Transverse colon (tissue), 4 donors: ENCODE measurements at regions of chr17 and their contacts with region 1.

Region 1: DNA sequence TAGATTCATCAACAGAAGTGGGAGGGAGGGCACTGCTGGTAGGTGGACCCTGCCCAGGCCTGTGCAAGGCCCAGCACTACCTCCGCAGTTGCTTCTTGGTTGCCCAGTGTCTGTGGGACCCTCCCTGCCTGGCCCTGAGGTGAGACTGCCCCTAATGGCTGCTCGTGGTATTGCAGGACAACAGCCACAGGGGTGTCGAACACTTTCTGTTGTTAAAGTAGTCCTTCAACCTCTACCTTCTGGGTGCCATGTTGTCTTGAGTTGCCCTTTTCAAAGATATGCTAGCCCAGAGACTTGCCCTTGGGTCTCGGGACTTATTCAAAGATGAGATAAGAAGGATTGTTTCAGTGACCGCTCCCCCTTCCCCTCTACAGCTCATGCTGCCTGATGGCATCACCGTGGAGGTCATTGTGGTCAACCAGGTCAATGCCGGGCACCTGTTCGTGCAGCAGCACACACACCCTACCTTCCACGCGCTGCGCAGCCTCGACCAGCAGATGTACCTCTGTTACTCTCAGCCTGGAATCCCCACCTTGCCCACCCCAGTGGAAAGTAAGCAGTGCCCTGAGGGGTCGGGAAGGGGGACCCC is 29.1 kb downstream of the AKAP1 start:
- DNase-seq: peak; percentile 68
- H3K4me3 ChIP-seq: no peak overlapping the region
- H3K27ac ChIP-seq: no peak overlapping the region
- H3K4me1 ChIP-seq: peaks cover 9 to 23% (median 19%) of the 10 kb centered on the region in 4 donors
- H3K27me3 ChIP-seq: no peaks in the 10 kb centered on the region
- CTCF ChIP-seq: peak; percentile 78 to 88 (median 88)
- EP300 ChIP-seq: no peak
- POLR2A ChIP-seq: no peak

Region 2: DNA sequence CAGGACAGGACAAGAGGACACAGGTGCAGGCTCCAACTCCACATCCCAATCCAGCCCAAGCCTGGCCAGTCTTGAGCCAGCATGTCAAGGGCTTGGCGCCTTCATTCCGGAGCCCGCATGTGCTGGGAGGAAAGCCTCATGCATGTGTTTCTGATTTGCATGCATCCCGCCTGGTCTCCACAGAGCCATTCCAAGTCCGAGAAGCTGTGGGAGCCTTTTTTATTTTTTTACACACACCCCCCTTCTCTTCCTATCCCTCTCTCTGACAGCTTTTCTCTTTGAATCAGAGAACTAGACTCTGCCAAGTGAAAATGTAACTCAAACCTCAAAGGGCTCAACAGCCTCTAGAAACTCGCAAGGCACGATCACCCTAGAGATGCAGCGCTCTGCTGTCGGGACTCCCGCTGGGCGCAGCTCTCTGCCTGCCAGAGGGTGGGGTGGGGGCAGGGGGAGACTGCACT is 475.6 kb before region 1 on chr17:
- in situ Hi-C with region 1: no loop called
- intact Hi-C with region 1: no loop called
- DNase-seq: no peak
- H3K4me3 ChIP-seq: no peak overlapping the region
- H3K27ac ChIP-seq: no peak overlapping the region
- H3K4me1 ChIP-seq: no peaks in the 10 kb centered on the region
- H3K27me3 ChIP-seq: peaks cover 9% of the 10 kb centered on the region
- CTCF ChIP-seq: no peak
- EP300 ChIP-seq: no peak
- POLR2A ChIP-seq: no peak

Region 3: DNA sequence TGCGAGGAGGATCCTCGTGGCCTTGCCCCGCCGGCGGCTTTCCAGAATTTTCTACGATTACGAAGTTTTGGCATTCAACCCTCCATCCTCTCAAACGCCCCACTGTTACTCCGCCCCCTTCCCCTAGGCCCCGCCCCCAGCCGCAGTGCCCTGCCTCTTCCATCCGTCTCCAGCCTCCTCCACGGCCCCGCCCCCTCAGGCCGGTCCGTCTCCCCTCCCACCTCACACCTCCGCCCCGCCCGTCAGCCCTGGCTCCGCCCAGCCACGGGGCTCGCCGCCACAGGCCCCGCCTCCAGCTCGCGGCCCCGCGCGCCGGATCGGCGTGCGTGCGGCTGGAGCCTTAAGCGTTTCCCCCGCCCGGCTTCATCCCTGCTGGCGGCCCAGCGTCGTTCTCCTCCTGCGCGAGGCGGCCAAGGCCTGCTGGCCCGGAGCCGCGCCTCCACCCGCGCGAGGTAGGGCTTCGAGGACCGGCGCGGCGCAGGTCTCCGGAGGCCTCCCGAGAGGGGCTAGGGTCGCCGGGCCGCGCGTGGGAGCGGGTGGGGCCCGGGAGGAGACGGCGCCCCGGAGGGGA is 280.3 kb before region 1 on chr17 and contains the starts of genes C17orf67 and DGKE:
- in situ Hi-C with region 1: loop called in 1 of 4 experiments (anchors 25 kb)
- intact Hi-C with region 1: no loop called
- DNase-seq: peak; percentile 99
- H3K4me3 ChIP-seq: peak within 1 kb of the TSS; percentile 61 to 93 (median 75)
- H3K27ac ChIP-seq: peak within 1 kb of the TSS; percentile 91 to 94 (median 93)
- H3K4me1 ChIP-seq: peaks cover 18 to 51% (median 31%) of the 10 kb centered on the region in 4 donors
- H3K27me3 ChIP-seq: no peaks in the 10 kb centered on the region
- CTCF ChIP-seq: no peak
- EP300 ChIP-seq: no peak
- POLR2A ChIP-seq: peak; percentile 55
- total RNA-seq, gene C17orf67: 0.27 to 1.3 TPM in 2 of 4 donors, not detected in the others
- total RNA-seq, gene DGKE: 2.6 to 35.9 (median 11.4) TPM

Region 4: GRCh38 chr17:57016066-57016746 is 98.0 kb before region 1 on chr17:
- in situ Hi-C with region 1: no loop called
- intact Hi-C with region 1: no loop called
- DNase-seq: no peak
- H3K4me3 ChIP-seq: no peak overlapping the region
- H3K27ac ChIP-seq: no peak overlapping the region
- H3K4me1 ChIP-seq: peaks cover 0 to 6% (median under 1%) of the 10 kb centered on the region in 4 donors
- H3K27me3 ChIP-seq: no peaks in the 10 kb centered on the region
- CTCF ChIP-seq: no peak
- EP300 ChIP-seq: no peak
- POLR2A ChIP-seq: no peak

Region 5: GRCh38 chr17:57577751-57578607 is 463.8 kb after region 1 on chr17:
- in situ Hi-C with region 1: no loop called
- intact Hi-C with region 1: no loop called
- DNase-seq: no peak
- H3K4me3 ChIP-seq: peak overlapping the region in 1 of 4 donors; percentile 26
- H3K27ac ChIP-seq: peak overlapping the region; percentile 24 to 33 (median 26)
- H3K4me1 ChIP-seq: peaks cover 0 to 11% (median 0%) of the 10 kb centered on the region in 4 donors
- H3K27me3 ChIP-seq: no peaks in the 10 kb centered on the region
- CTCF ChIP-seq: no peak
- EP300 ChIP-seq: no peak
- POLR2A ChIP-seq: no peak